ENCODE measurements at regions of chr19 and their contacts with region 1.

Region 1: DNA sequence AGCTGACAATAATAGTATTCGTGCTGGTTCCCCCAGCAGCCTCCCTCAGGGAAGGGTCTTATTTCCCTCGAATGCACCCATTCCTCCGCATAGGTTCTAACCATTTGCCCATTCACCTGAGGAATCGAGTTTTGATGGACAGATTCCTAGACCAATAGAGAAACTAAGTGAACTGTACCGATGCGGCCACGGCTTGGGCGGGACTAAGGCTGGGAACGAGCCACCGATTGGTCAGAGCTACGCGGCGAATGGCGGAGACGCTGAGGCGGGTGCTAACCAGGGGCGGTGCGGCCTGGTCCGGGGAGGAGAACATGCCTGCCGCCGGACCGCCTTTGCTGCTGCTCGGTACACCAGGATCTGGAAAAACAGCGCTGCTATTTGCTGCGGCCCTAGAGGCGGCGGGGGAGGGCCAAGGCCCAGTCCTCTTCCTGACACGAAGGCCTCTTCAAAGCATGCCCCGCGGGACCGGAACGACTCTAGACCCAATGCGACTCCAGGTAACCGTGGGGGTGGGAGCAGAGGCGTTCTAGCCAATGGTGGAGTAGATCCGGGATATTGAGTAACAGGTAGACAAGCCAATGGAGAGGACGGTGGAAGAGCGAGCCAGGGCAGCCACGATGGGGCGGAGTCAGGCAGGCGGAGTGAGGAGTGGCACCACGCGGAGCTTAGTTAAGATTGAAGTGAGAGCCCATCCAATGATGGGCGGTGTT is at the start of gene SWSAP1:
- DNase-seq: peak; percentile 91 to 100 (median 96)
- ATAC-seq: peak; percentile 88
- H3K4me3 ChIP-seq: peak within 1 kb of the TSS; percentile 73 to 80
- H3K4me3 Mint-ChIP-seq: no peak within 1 kb of the TSS
- H3K27ac ChIP-seq: peak within 1 kb of the TSS; percentile 83 to 98
- H3K27ac Mint-ChIP-seq: no peak within 1 kb of the TSS
- H3K4me1 ChIP-seq: peaks cover 28% of the 10 kb centered on the region
- H3K4me1 Mint-ChIP-seq: peaks cover 20% of the 10 kb centered on the region
- H3K27me3 ChIP-seq: no peaks in the 10 kb centered on the region
- H3K27me3 Mint-ChIP-seq: no peaks in the 10 kb centered on the region
- CTCF ChIP-seq: no peak
- total RNA-seq, gene SWSAP1: 2.2 to 2.4 TPM

Region 2: DNA sequence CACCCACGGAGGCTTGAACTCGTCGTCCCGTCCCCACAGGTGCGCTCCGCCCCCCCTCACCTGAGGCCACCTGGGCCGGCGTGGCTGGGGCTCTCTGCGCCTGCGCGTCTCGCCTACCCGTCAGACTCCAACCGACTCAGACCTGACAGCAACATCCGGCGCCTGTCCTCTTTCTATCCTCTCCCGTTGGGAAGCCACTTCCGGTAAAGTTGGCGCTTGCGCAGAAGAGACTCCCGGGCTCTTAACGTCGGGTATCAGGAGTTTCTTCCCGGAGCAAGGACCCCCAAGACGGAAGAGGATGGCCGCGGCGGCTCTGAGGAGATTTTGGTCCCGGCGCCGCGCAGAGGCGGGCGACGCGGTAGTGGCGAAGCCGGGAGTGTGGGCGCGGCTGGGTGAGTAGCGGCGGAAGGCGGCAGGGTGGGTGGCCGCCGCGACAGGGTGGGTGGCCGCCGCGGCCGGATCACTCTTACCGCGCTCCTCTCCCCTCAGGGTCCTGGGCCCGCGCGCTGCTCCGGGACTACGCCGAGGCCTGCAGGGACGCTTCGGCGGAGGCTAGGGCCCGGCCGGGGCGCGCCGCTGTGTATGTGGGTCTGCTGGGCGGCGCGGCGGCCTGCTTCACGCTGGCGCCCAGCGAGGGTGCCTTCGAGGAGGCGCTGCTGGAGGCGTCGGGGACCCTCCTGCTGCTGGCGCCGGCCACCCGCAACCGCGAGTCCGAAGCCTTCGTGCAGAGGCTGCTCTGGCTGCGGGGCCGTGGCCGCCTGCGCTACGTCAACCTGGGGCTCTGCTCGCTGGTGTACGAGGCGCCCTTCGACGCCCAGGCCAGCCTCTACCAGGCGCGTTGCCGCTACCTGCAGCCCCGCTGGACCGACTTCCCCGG is 445.8 kb before region 1 on chr19 and contains the starts of genes TIMM29 and YIPF2:
- CTCF ChIA-PET with region 1: no interaction called
- POLR2A ChIA-PET with region 1: no interaction called
- intact Hi-C with region 1: loop called in 1 of 2 experiments (anchors 10 kb)
- DNase-seq: peak; percentile 86 to 97 (median 94)
- ATAC-seq: peak; percentile 88
- H3K4me3 ChIP-seq: peak within 1 kb of the TSS; percentile 73 to 86
- H3K4me3 Mint-ChIP-seq: peak within 1 kb of the TSS; percentile 95
- H3K27ac ChIP-seq: peak within 1 kb of the TSS; percentile 63 to 78
- H3K27ac Mint-ChIP-seq: peak within 1 kb of the TSS; percentile 91
- H3K4me1 ChIP-seq: peaks cover 17% of the 10 kb centered on the region
- H3K4me1 Mint-ChIP-seq: peaks cover 31% of the 10 kb centered on the region
- H3K27me3 ChIP-seq: no peaks in the 10 kb centered on the region
- H3K27me3 Mint-ChIP-seq: no peaks in the 10 kb centered on the region
- CTCF ChIP-seq: no peak
- total RNA-seq, gene TIMM29: 27.9 TPM
- total RNA-seq, gene YIPF2: 25.9 to 27.6 TPM

Region 3: DNA sequence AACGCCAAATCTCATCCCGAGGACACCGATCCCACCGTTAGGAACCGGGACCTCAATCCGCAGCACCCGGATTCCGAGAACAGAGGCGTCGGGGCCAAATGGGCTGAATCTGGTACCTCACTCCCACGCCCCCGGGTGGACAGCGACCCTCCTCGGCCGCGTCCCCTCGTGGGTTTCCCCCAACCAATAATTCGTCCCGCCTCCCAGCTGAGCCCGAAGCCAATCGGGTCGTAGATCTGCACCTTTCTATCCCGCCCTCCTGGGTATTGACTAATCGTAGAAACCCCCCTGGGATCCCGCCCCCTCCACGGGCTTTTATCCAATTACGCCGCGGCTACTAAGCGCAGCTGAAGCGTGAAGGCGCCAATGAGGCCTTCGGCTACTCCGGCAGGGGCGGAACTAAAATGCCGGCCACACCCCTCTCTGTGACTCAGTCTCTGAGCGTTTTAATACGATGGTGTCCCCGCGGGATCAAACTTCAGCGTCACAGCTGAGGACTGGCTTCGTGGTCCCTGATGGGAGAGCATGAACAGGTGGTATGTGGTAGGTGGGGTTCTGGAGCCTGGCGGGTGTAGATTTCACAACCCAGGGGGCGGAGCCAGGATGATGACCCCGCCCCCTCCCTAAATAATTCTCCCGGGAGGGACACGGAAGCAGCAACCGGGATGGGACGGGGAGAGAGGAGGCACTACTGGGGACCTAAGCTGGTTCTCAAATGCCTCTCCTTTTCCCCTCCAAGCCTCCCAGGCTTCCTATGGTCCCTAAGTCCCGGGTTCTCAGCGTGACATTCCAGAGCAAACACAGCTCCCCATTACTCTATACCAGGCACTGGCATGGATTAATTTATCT is 28.3 kb before region 1 on chr19 and contains the starts of genes CCDC159 and TMEM205:
- CTCF ChIA-PET with region 1: no interaction called
- POLR2A ChIA-PET with region 1: interaction called, 13 read pairs
- intact Hi-C with region 1: loop called (anchors 1 kb)
- DNase-seq: peak; percentile 96 to 100 (median 98)
- ATAC-seq: peak; percentile 95
- H3K4me3 ChIP-seq: peak within 1 kb of the TSS; percentile 96 to 100
- H3K4me3 Mint-ChIP-seq: peak within 1 kb of the TSS; percentile 93
- H3K27ac ChIP-seq: peak within 1 kb of the TSS; percentile 73 to 77
- H3K27ac Mint-ChIP-seq: peak within 1 kb of the TSS; percentile 88
- H3K4me1 ChIP-seq: peaks cover 17% of the 10 kb centered on the region
- H3K4me1 Mint-ChIP-seq: peaks cover 27% of the 10 kb centered on the region
- H3K27me3 ChIP-seq: no peaks in the 10 kb centered on the region
- H3K27me3 Mint-ChIP-seq: no peaks in the 10 kb centered on the region
- CTCF ChIP-seq: no peak
- total RNA-seq, gene CCDC159: 26.9 to 36.4 TPM
- total RNA-seq, gene TMEM205: 6.5 to 10.6 TPM

Region 4: GRCh38 chr19:11482384-11483050 is 107.9 kb after region 1 on chr19:
- CTCF ChIA-PET with region 1: interaction called, 24 read pairs
- POLR2A ChIA-PET with region 1: interaction called, 5 read pairs
- intact Hi-C with region 1: no loop called
- DNase-seq: peak; percentile 75 to 95 (median 83)
- ATAC-seq: peak; percentile 74
- H3K4me3 ChIP-seq: peak overlapping the region; percentile 17 to 27
- H3K4me3 Mint-ChIP-seq: peak overlapping the region; percentile 60
- H3K27ac ChIP-seq: no peak overlapping the region
- H3K27ac Mint-ChIP-seq: no peak overlapping the region
- H3K4me1 ChIP-seq: peaks cover 22% of the 10 kb centered on the region
- H3K4me1 Mint-ChIP-seq: peaks cover 22% of the 10 kb centered on the region
- H3K27me3 ChIP-seq: peaks cover 18 to 26% of the 10 kb centered on the region in 2 experiments
- H3K27me3 Mint-ChIP-seq: peaks cover 28% of the 10 kb centered on the region
- CTCF ChIP-seq: peak; percentile 88

Measured in CD8-positive, alpha-beta T cell (primary cell).